ENCODE measurements at regions of chr2 and their contacts with region 1.

Region 1: GRCh38 chr2:75361486-75361885 is 162.2 kb upstream of the TACR1 start:
- DNase-seq: no peak
- ATAC-seq: no peak
- H3K4me3 ChIP-seq: no peak overlapping the region
- H3K27ac ChIP-seq: no peak overlapping the region
- H3K4me1 ChIP-seq: no peaks in the 10 kb centered on the region
- H3K27me3 ChIP-seq: no peaks in the 10 kb centered on the region
- CTCF ChIP-seq: no peak
- EP300 ChIP-seq: no peak
- POLR2A ChIP-seq: no peak
- RAD21 ChIP-seq: no peak

Region 2: DNA sequence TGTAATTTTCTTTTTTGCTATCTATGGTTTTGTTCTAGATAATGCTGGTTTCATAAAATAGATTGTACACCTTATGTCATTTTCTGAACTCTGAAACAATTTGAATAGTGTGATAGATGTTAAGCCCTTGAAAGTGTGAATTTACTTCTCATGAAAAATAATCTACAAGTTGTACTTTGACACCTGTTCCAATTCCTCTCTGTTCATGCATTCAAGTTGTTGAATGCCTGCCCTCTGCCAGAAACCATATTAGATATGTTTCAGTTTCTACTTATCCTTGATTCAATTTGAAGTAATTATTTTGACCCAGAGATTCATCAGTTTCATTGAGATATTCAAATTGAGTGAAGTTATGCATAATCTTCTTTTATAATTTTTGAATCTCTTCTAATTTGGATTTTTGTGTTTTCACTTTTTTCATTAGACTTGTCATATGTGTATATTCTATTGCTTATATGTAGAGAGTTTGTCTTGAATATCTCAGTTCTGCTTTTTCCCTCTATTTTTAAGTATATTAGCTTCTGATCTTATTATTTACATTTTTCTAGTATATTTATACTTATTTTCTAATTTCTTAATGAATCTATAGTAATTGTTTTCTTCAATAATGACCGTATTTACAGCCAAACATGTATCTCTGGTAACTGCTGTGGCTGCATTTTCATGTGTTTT is 18.8 kb before region 1 on chr2:
- CTCF ChIA-PET with region 1: no interaction called
- POLR2A ChIA-PET with region 1: no interaction called
- RAD21 ChIA-PET with region 1: no interaction called
- SMC1A ChIA-PET with region 1: interaction called, 18 read pairs
- in situ Hi-C with region 1: no loop called
- intact Hi-C with region 1: no loop called
- DNase-seq: peak; percentile 35
- ATAC-seq: peak; percentile 85
- H3K4me3 ChIP-seq: no peak overlapping the region
- H3K27ac ChIP-seq: no peak overlapping the region
- H3K4me1 ChIP-seq: no peaks in the 10 kb centered on the region
- H3K27me3 ChIP-seq: no peaks in the 10 kb centered on the region
- CTCF ChIP-seq: no peak
- EP300 ChIP-seq: no peak
- POLR2A ChIP-seq: no peak
- RAD21 ChIP-seq: no peak